ENCODE measurements at regions of chr6 and their contacts with region 1.

Region 1: GRCh38 chr6:83067448-83068413 is at the start of gene DOP1A:
- DNase-seq: peak; percentile 93
- H3K4me3 ChIP-seq: peak within 1 kb of the TSS; percentile 74 to 91 (median 75)
- H3K27ac ChIP-seq: peak within 1 kb of the TSS; percentile 12
- H3K4me1 ChIP-seq: peaks cover 28% of the 10 kb centered on the region
- H3K27me3 ChIP-seq: no peaks in the 10 kb centered on the region
- CTCF ChIP-seq: peak; percentile 95 to 98
- POLR2A ChIP-seq: peak; percentile 34
- total RNA-seq, gene DOP1A: 12.3 and 14.2 TPM in 2 replicates

Region 2: GRCh38 chr6:82247634-82248232 is 820.0 kb before region 1 on chr6 and contains the start of gene IBTK:
- CTCF ChIA-PET with region 1: interaction called, 38 read pairs
- POLR2A ChIA-PET with region 1: no interaction called
- dilution Hi-C with region 1: no loop called
- intact Hi-C with region 1: no loop called
- DNase-seq: peak; percentile 93
- H3K4me3 ChIP-seq: peak within 1 kb of the TSS; percentile 60 to 91 (median 67)
- H3K27ac ChIP-seq: peak within 1 kb of the TSS; percentile 67
- H3K4me1 ChIP-seq: peaks cover 35% of the 10 kb centered on the region
- H3K27me3 ChIP-seq: no peaks in the 10 kb centered on the region
- CTCF ChIP-seq: no peak
- POLR2A ChIP-seq: peak; percentile 87
- total RNA-seq, gene IBTK: 29.5 and 30.5 TPM in 2 replicates

Region 3: DNA sequence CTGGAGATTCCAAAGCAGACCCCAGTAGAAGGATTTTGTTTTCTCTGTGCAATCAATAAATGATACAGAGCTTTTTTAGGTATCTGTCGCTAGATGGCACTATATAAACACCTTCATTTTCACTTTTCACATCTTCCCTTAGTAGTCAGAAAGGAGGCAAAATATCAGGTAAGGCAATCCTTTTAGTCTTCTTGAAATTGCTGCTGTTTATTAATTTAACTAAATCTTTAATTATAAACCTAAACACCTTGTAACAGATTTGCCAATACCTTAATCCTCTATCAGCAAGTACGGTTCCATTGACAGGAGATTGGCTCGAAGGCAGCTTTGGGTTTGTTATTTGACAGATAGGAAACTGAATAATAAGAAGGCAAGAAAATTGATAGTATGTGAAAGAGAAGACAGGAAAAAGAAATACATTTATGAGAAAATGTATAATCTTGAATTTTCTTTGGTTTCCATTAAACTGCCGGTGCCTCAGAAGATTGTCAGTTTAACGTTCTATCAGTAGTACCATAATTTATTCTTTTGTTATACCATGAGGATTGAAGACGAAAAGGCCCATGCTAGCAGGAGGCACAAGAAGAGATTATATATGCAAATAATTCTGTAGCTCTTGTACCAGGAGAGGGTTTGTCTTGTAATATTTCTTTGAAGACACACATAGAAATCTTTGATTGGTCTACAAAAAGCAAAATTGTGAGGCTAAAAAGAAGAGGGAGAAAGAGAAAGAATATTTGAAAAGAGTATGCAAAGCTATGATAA is 796.7 kb before region 1 on chr6:
- CTCF ChIA-PET with region 1: interaction called, 41 read pairs
- POLR2A ChIA-PET with region 1: no interaction called
- dilution Hi-C with region 1: no loop called
- intact Hi-C with region 1: no loop called
- DNase-seq: peak; percentile 32
- H3K4me3 ChIP-seq: no peak overlapping the region
- H3K27ac ChIP-seq: no peak overlapping the region
- H3K4me1 ChIP-seq: no peaks in the 10 kb centered on the region
- H3K27me3 ChIP-seq: peaks cover 3 to 4% of the 10 kb centered on the region in 2 experiments
- CTCF ChIP-seq: peak; percentile 27 to 48
- POLR2A ChIP-seq: no peak

Region 4: GRCh38 chr6:82568290-82569014 is 499.3 kb before region 1 on chr6:
- CTCF ChIA-PET with region 1: no interaction called
- POLR2A ChIA-PET with region 1: no interaction called
- dilution Hi-C with region 1: no loop called
- intact Hi-C with region 1: no loop called
- DNase-seq: no peak
- H3K4me3 ChIP-seq: no peak overlapping the region
- H3K27ac ChIP-seq: no peak overlapping the region
- H3K4me1 ChIP-seq: no peaks in the 10 kb centered on the region
- H3K27me3 ChIP-seq: no peaks in the 10 kb centered on the region
- CTCF ChIP-seq: no peak
- POLR2A ChIP-seq: no peak

Region 5: GRCh38 chr6:83199863-83200225 is 132.1 kb after region 1 on chr6:
- CTCF ChIA-PET with region 1: interaction called, 46 read pairs
- POLR2A ChIA-PET with region 1: no interaction called
- dilution Hi-C with region 1: no loop called
- intact Hi-C with region 1: no loop called
- DNase-seq: peak; percentile 69
- H3K4me3 ChIP-seq: no peak overlapping the region
- H3K27ac ChIP-seq: peak overlapping the region; percentile 88
- H3K4me1 ChIP-seq: peaks cover 26% of the 10 kb centered on the region
- H3K27me3 ChIP-seq: no peaks in the 10 kb centered on the region
- CTCF ChIP-seq: no peak
- POLR2A ChIP-seq: no peak

Region 6: GRCh38 chr6:83403191-83403590 is 335.5 kb after region 1 on chr6:
- CTCF ChIA-PET with region 1: no interaction called
- POLR2A ChIA-PET with region 1: no interaction called
- dilution Hi-C with region 1: no loop called
- intact Hi-C with region 1: loop called (anchors 5 kb)
- DNase-seq: no peak
- H3K4me3 ChIP-seq: no peak overlapping the region
- H3K27ac ChIP-seq: no peak overlapping the region
- H3K4me1 ChIP-seq: peaks cover 2% of the 10 kb centered on the region
- H3K27me3 ChIP-seq: no peaks in the 10 kb centered on the region
- CTCF ChIP-seq: no peak
- POLR2A ChIP-seq: no peak

Region 7: GRCh38 chr6:83430611-83431563 is 363.2 kb after region 1 on chr6 and contains the start of gene ME1:
- CTCF ChIA-PET with region 1: interaction called, 3 read pairs
- POLR2A ChIA-PET with region 1: no interaction called
- dilution Hi-C with region 1: no loop called
- intact Hi-C with region 1: loop called (anchors 5 kb)
- DNase-seq: peak; percentile 77
- H3K4me3 ChIP-seq: peak within 1 kb of the TSS; percentile 60 to 90 (median 73)
- H3K27ac ChIP-seq: peak within 1 kb of the TSS; percentile 84
- H3K4me1 ChIP-seq: peaks cover 7% of the 10 kb centered on the region
- H3K27me3 ChIP-seq: no peaks in the 10 kb centered on the region
- CTCF ChIP-seq: no peak
- POLR2A ChIP-seq: no peak
- total RNA-seq, gene ME1: 27.0 and 29.3 TPM in 2 replicates

Region 8: GRCh38 chr6:83536034-83536646 is 468.4 kb after region 1 on chr6:
- CTCF ChIA-PET with region 1: interaction called, 21 read pairs
- POLR2A ChIA-PET with region 1: no interaction called
- dilution Hi-C with region 1: no loop called
- intact Hi-C with region 1: loop called (anchors 5 kb)
- DNase-seq: peak; percentile 58
- H3K4me3 ChIP-seq: no peak overlapping the region
- H3K27ac ChIP-seq: no peak overlapping the region
- H3K4me1 ChIP-seq: no peaks in the 10 kb centered on the region
- H3K27me3 ChIP-seq: peaks cover 0 to 7% of the 10 kb centered on the region in 2 experiments
- CTCF ChIP-seq: peak; percentile 69 to 81
- POLR2A ChIP-seq: no peak